ENCODE measurements at regions of chr19 and their contacts with region 1.

Region 1: DNA sequence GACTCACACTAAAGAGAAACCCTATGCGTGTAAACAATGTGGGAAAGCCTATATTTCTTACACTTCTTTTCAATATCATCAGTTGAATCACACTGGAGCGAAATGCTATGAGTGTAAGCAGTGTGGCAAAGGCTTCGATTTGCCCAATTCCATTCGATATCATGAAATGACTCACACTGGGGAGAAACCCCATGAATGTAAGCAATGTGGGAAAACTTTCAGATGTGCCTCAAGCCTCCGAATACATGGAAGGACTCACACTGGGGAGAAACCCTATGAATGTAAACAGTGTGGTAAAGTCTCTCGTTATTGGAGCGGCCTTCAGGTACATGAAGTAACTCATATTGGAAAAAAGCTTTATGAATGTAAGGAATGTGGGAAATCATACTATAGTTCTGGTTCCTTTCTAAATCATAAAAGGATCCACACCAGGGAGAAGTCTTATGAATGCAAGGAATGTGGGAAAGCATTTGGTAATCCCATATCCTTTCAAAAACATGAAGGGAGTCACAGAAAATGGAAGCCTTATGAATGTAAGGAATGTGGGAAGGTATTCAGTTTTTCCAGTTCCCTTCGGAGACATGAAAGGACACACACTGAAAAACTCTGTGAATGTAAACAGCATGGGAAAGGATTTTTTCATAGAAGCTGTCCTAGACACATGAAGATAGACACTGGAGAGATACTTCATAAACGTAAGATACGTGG is 28.1 kb downstream of the ZNF20 start:
- DNase-seq: no peak
- H3K4me3 ChIP-seq: no peak overlapping the region
- H3K27ac ChIP-seq: no peak overlapping the region
- H3K4me1 ChIP-seq: no peaks in the 10 kb centered on the region
- H3K27me3 ChIP-seq: no peaks in the 10 kb centered on the region
- CTCF ChIP-seq: no peak
- EP300 ChIP-seq: no peak
- POLR2A ChIP-seq: no peak

Region 2: GRCh38 chr19:12075538-12076139 is 36.5 kb before region 1 on chr19:
- intact Hi-C with region 1: loop called in 1 of 4 experiments (anchors 1 kb)
- DNase-seq: no peak
- H3K4me3 ChIP-seq: no peak overlapping the region
- H3K27ac ChIP-seq: no peak overlapping the region
- H3K4me1 ChIP-seq: no peaks in the 10 kb centered on the region
- H3K27me3 ChIP-seq: no peaks in the 10 kb centered on the region
- CTCF ChIP-seq: no peak
- EP300 ChIP-seq: no peak
- POLR2A ChIP-seq: no peak

Measured in ovary (tissue), 10 donors.